ENCODE measurements at regions of chr11 and their contacts with region 1.

Region 1: DNA sequence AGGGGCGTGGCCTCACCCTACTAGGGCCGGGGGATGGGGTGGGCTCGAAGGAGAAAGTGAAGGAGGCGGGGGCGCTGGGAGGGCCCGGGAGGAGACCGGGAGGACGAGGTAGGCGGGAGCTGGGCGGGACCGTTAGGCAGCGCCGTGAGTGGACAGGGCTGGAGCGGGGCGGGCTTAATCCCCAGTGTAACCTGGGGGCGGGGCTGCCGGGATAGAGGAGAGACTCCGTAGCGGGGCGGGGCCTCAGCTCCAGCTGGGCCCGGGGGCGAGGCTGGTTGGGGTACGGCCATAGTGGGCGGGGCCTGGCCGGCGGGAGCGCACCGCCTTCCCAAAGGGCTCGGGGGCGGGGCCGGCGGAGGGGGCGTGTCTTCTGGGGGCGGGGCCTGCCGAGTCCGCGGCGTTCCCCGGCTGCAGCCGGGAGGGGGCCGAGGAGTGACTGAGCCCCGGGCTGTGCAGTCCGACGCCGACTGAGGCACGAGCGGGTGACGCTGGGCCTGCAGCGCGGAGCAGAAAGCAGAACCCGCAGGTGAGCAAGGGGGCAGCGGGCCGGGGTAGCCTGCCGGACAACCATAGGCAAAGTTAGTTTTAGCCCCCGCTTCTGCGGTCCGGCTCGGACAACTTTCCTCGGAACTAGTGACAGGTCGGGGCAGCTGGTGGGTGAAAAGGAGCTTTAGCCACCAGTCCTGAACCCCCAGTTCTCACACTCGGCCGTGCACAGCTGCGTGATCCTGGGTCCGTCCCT is at the start of gene CD82:
- DNase-seq: peak; percentile 88 to 99 (median 97)
- ATAC-seq: peak; percentile 67
- H3K4me3 ChIP-seq: peak within 1 kb of the TSS; percentile 93
- H3K4me3 Mint-ChIP-seq: peak within 1 kb of the TSS; percentile 95
- H3K27ac ChIP-seq: peak within 1 kb of the TSS; percentile 74 to 78
- H3K27ac Mint-ChIP-seq: peak within 1 kb of the TSS; percentile 85
- H3K4me1 ChIP-seq: peaks cover 61% of the 10 kb centered on the region
- H3K4me1 Mint-ChIP-seq: peaks cover 78% of the 10 kb centered on the region
- H3K27me3 ChIP-seq: no peaks in the 10 kb centered on the region
- H3K27me3 Mint-ChIP-seq: no peaks in the 10 kb centered on the region
- CTCF ChIP-seq: peak; percentile 47
- total RNA-seq, gene CD82: 33.8 to 37.3 TPM

Region 2: DNA sequence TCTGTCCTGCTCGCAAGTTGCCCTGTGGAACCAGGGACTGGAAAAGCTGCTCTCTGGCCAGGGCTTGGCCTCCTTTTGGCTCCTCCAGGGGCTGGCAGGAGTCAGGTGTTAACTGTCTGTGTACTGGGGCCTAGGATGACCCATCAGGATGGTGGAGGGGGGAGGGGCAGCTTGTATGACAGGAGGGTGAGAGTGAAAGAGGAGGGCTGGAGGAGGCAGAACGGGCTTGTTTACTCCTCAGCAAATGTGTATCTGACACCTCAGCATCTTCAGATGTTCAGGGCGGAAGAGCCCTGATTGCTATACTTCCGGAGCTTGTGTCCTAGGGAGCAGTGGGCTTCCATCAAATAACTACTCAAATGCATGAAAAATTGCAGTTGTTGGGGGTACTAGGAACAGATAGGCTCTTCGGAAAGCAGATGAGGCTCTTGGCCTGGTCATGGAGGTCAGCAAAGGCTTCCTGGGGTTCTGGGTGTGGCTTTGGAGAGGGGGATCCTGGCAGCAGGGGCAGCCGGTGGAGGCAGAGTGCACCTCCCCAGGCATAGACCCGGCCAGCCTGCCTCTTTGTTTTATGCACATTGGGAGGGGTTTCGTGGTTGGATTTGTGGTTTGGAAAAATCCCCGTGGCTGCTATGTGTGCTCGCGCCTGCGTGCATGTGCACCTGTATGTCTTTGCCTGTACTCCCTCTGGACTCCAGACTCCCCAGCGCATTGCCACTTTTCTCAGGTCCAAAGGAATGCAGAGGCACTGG is 31.3 kb after region 1 on chr11:
- CTCF ChIA-PET with region 1: interaction called, 3 read pairs
- POLR2A ChIA-PET with region 1: interaction called, 54 read pairs
- intact Hi-C with region 1: loop called (anchors 2 kb)
- DNase-seq: peak; percentile 31 to 93 (median 58)
- ATAC-seq: peak; percentile 88
- H3K4me3 ChIP-seq: peak overlapping the region; percentile 30
- H3K4me3 Mint-ChIP-seq: peak overlapping the region; percentile 53
- H3K27ac ChIP-seq: peak overlapping the region; percentile 77 to 83
- H3K27ac Mint-ChIP-seq: peak overlapping the region; percentile 98
- H3K4me1 ChIP-seq: peaks cover 88% of the 10 kb centered on the region
- H3K4me1 Mint-ChIP-seq: peaks cover 84% of the 10 kb centered on the region
- H3K27me3 ChIP-seq: no peaks in the 10 kb centered on the region
- H3K27me3 Mint-ChIP-seq: no peaks in the 10 kb centered on the region
- CTCF ChIP-seq: no peak

Region 3: GRCh38 chr11:44611687-44612434 is 46.5 kb after region 1 on chr11:
- CTCF ChIA-PET with region 1: interaction called, 168 read pairs
- POLR2A ChIA-PET with region 1: interaction called, 39 read pairs
- intact Hi-C with region 1: loop called in 1 of 2 experiments (anchors 2 kb)
- DNase-seq: peak; percentile 19 to 89 (median 62)
- ATAC-seq: peak; percentile 83
- H3K4me3 ChIP-seq: no peak overlapping the region
- H3K4me3 Mint-ChIP-seq: peak overlapping the region; percentile 11
- H3K27ac ChIP-seq: peak overlapping the region; percentile 49 to 66
- H3K27ac Mint-ChIP-seq: peak overlapping the region; percentile 82
- H3K4me1 ChIP-seq: peaks cover 97% of the 10 kb centered on the region
- H3K4me1 Mint-ChIP-seq: peaks cover 84% of the 10 kb centered on the region
- H3K27me3 ChIP-seq: no peaks in the 10 kb centered on the region
- H3K27me3 Mint-ChIP-seq: no peaks in the 10 kb centered on the region
- CTCF ChIP-seq: no peak

Region 4: DNA sequence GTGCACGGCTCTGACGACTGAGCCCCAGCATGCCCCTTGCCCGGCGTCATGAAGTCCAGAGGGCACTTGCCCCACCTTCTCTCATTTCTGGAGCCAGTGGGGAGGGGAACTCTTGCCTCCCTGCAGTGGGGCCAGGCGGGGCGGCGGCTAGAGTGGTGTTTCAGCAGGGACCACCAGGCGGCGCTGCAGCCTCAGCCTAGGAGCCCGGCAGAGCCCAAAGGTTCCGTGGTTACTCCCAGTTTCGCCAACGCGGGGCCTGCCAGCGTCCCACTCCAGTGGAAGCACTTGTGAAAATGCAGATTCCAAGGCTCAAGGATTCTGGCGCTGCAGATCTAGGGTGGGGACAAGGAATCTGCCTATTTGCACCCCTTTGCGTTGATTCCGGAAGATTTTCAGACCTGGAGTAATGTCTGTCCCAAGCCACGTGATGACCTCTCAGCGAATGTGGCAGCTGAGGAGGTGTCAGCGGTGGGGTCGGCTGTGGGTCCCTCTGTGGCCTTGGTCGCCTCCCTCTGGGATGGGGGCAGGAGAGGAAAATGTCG is 55.8 kb after region 1 on chr11:
- CTCF ChIA-PET with region 1: interaction called, 168 read pairs
- POLR2A ChIA-PET with region 1: interaction called, 3 read pairs
- intact Hi-C with region 1: no loop called
- DNase-seq: peak; percentile 30 to 80 (median 60)
- ATAC-seq: peak; percentile 69
- H3K4me3 ChIP-seq: no peak overlapping the region
- H3K4me3 Mint-ChIP-seq: no peak overlapping the region
- H3K27ac ChIP-seq: no peak overlapping the region
- H3K27ac Mint-ChIP-seq: no peak overlapping the region
- H3K4me1 ChIP-seq: peaks cover 38% of the 10 kb centered on the region
- H3K4me1 Mint-ChIP-seq: peaks cover 36% of the 10 kb centered on the region
- H3K27me3 ChIP-seq: no peaks in the 10 kb centered on the region
- H3K27me3 Mint-ChIP-seq: no peaks in the 10 kb centered on the region
- CTCF ChIP-seq: peak; percentile 65

Region 5: DNA sequence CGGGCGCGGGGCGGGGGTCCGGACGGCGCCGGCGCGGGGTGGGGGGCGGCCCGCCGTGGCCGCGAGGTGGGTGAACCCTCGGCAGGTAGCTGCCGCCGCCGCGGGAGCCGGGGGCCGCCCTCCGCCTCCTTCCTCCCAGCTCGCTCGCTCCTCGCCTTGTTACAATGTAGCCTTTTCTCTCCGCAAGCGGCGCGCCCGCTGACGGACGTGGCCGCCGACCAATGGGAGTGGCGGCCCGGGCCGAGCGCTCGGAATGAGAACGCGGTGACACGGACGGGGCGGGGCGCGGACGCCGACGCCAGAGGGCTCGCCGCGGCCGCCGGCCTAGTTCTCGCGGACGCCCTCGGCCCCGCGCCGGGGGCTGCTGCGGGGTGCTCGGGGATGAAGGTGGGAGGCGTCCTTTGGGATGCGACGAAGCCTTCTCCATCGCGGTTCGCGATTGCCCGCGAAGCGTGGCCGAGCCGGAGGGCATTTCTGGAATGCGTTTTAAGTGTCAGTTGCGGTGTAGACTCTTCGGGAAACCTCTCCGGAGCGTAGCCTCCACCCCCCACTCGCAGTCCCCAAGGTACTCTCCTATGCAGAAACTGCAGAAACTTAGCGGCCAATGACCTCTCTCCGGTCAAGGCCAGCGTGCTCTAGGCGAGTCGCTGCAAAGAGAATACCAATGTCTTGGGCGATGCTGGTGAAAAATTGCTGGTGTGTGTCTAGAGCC is 581.8 kb after region 1 on chr11:
- CTCF ChIA-PET with region 1: no interaction called
- POLR2A ChIA-PET with region 1: no interaction called
- intact Hi-C with region 1: loop called in 1 of 2 experiments (anchors 2 kb)
- DNase-seq: peak; percentile 82 to 96 (median 91)
- ATAC-seq: peak; percentile 97
- H3K4me3 ChIP-seq: peak overlapping the region; percentile 72
- H3K4me3 Mint-ChIP-seq: peak overlapping the region; percentile 96
- H3K27ac ChIP-seq: peak overlapping the region; percentile 37 to 49
- H3K27ac Mint-ChIP-seq: peak overlapping the region; percentile 70
- H3K4me1 ChIP-seq: peaks cover 23% of the 10 kb centered on the region
- H3K4me1 Mint-ChIP-seq: peaks cover 39% of the 10 kb centered on the region
- H3K27me3 ChIP-seq: peaks cover 0 to 10% of the 10 kb centered on the region in 2 experiments
- H3K27me3 Mint-ChIP-seq: peaks cover 24% of the 10 kb centered on the region
- CTCF ChIP-seq: no peak

Region 6: DNA sequence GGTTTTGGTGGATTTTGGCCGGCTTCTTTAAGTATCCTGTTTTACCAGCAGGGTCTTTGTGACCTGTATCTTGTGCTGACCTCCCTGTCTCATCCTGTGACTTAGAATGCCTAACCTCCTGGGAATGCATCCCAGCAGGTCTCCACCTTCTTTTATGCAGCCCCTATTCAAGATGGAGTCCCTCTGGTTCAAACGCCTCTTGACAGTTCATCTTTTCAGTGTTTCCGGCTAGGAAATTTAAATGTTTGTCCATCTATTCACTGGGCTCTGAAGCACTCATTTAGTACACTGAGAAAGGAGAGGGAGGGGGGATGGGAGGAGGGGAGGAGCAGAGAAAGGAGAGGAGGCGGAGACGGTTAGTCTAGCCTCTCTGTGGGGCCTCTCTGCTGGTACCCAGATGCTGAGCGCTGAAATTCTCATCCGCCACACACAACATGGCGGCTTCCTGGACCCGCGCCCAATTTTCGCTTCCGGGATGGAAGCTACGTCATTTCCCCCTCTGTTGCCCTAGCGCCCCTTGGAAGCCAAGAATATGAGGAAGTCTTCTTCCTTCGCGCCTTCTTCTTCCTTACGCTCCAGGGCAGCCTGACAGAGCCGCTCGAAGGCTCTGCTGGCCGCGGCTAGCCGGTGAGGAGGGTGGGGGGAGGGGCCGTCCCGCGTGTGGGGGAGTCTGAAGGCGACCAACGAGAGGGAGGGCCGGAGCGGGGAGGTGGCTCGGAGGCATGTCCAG is 789.8 kb after region 1 on chr11:
- CTCF ChIA-PET with region 1: no interaction called
- POLR2A ChIA-PET with region 1: no interaction called
- intact Hi-C with region 1: loop called in 1 of 2 experiments (anchors 10 kb)
- DNase-seq: peak; percentile 82 to 95 (median 90)
- ATAC-seq: peak; percentile 92
- H3K4me3 ChIP-seq: peak overlapping the region; percentile 79
- H3K4me3 Mint-ChIP-seq: peak overlapping the region; percentile 84
- H3K27ac ChIP-seq: peak overlapping the region; percentile 43 to 52
- H3K27ac Mint-ChIP-seq: peak overlapping the region; percentile 57
- H3K4me1 ChIP-seq: peaks cover 17% of the 10 kb centered on the region
- H3K4me1 Mint-ChIP-seq: peaks cover 22% of the 10 kb centered on the region
- H3K27me3 ChIP-seq: no peaks in the 10 kb centered on the region
- H3K27me3 Mint-ChIP-seq: peaks cover 9% of the 10 kb centered on the region
- CTCF ChIP-seq: no peak

Measured in CD4-positive, alpha-beta T cell (primary cell).